Mammary epithelial cell (primary cell): ENCODE measurements at regions of chr12 and their contacts with region 1.

Region 1: GRCh38 chr12:132614861-132615578 is 3.6 kb upstream of the P2RX2 start:
- DNase-seq: peak; percentile 74
- H3K4me3 ChIP-seq: no peak overlapping the region
- H3K27ac ChIP-seq: no peak overlapping the region
- H3K4me1 ChIP-seq: peaks cover 7% of the 10 kb centered on the region
- H3K27me3 ChIP-seq: peaks cover 18% of the 10 kb centered on the region
- CTCF ChIP-seq: peak; percentile 73 to 87

Region 2: DNA sequence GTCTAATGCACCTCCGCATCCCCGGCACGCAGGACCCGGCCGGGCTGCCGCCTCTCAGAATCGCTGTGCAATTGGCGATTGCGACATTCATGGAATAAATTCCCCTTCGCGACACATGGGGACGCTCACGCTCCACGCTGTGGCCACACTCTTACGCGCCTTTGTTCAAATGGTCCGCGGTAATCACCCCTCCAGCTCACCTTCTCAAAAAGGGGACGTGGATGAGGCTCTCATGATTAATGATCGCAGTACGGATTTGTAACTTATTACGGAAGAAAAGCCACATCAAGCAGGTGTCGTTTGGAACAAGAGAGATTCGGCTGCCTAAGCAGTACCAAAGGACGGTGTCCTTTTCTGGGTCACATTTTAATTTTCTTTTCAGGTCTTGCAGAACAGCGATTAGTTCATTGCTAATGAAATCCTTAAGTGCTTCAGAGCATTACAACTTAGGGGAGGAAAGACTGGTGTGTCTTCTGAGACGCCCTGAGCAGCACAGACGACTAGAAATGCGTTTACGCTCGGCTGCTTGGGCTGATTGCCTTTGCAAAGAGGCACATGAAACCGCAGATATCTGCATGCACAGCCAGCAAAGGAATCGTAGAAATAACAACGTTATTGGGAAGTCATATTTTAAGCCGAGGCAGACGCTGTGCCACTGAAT is 1698.6 kb before region 1 on chr12:
- CTCF ChIA-PET with region 1: no interaction called
- dilution Hi-C with region 1: no loop called
- in situ Hi-C with region 1: no loop called
- intact Hi-C with region 1: loop called (anchors 10 kb)
- DNase-seq: peak; percentile 21
- H3K4me3 ChIP-seq: no peak overlapping the region
- H3K27ac ChIP-seq: no peak overlapping the region
- H3K4me1 ChIP-seq: no peaks in the 10 kb centered on the region
- H3K27me3 ChIP-seq: no peaks in the 10 kb centered on the region
- CTCF ChIP-seq: peak; percentile 59 to 87

Region 3: DNA sequence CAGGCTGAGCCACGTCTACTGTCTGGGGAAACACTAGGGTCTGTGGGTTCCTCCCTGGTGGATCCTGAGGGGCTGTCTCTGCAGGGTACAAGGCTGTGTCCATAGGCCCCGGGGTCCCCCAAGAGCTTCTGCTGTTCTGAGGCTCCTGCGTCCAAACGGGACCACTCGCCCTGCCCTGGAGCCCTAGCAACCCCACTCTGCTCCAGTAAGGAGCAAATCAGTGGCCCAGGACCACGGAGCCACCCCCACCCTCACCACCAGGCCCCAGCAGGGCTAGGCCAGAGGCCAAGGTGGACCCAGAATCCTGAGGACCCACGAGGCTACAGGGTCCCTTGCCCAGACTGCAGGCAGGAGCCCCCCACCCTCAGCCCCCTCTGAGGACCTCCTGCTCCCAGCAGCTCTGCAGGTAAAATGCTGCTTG is 210.6 kb before region 1 on chr12:
- CTCF ChIA-PET with region 1: no interaction called
- dilution Hi-C with region 1: no loop called
- in situ Hi-C with region 1: no loop called
- intact Hi-C with region 1: no loop called
- DNase-seq: no peak
- H3K4me3 ChIP-seq: no peak overlapping the region
- H3K27ac ChIP-seq: no peak overlapping the region
- H3K4me1 ChIP-seq: peaks cover 8% of the 10 kb centered on the region
- H3K27me3 ChIP-seq: peaks cover 18% of the 10 kb centered on the region
- CTCF ChIP-seq: no peak

Region 4: GRCh38 chr12:132414634-132415326 is 200.2 kb before region 1 on chr12:
- CTCF ChIA-PET with region 1: interaction called, 5 read pairs
- dilution Hi-C with region 1: no loop called
- in situ Hi-C with region 1: loop called in 1 of 2 experiments (anchors 10 kb)
- intact Hi-C with region 1: loop called (anchors 1 kb)
- DNase-seq: peak; percentile 57
- H3K4me3 ChIP-seq: no peak overlapping the region
- H3K27ac ChIP-seq: no peak overlapping the region
- H3K4me1 ChIP-seq: no peaks in the 10 kb centered on the region
- H3K27me3 ChIP-seq: peaks cover 3% of the 10 kb centered on the region
- CTCF ChIP-seq: peak; percentile 58 to 97

Region 5: DNA sequence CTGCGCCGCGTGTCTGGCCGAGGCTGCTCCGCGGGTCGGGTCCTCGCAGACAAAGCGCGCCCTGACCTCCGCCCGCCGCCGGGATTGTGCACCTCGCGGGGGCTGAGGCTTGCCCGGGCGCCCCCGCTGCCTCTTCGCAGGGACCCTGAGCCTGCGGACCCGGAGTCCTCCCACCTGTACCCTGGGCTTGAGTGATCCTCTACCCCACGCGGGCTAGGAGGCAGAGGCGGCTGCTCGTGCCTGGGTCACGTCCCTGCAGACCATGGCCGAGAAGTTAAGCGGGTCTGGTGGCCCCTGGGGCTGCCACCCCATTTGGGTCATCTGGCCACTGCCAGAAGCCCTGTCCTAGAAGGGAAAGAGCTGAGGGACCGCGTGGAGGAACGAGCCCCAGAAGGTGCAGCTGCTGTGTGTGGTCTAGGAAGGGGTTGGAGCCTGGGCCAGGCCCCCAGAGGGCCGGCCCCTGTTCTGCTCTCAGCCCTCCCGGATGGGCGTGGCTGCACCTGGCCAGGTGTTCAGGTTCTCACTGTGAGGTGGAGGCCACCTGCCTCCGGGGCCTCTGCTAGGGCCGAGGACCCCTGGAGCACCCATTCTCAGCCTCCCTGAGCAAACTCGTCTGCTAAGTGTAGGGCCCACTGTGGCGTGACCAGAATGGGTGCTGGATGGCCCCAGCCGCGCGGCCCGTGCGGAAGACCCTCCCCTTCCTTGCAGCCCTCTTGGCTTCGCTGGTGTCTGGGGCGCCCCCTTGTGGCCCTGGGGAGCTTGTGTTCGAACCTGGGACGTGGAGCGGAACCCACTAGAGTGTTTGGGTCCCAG is 54.2 kb before region 1 on chr12:
- CTCF ChIA-PET with region 1: no interaction called
- dilution Hi-C with region 1: no loop called
- in situ Hi-C with region 1: no loop called
- intact Hi-C with region 1: loop called (anchors 1 kb)
- DNase-seq: peak; percentile 52
- H3K4me3 ChIP-seq: peak overlapping the region; percentile 42 to 66 (median 63)
- H3K27ac ChIP-seq: no peak overlapping the region
- H3K4me1 ChIP-seq: peaks cover 12% of the 10 kb centered on the region
- H3K27me3 ChIP-seq: no peaks in the 10 kb centered on the region
- CTCF ChIP-seq: peak; percentile 44 to 75

Region 6: GRCh38 chr12:132657004-132657683 is 42.1 kb after region 1 on chr12:
- CTCF ChIA-PET with region 1: no interaction called
- dilution Hi-C with region 1: loop called (anchors 5 kb)
- in situ Hi-C with region 1: no loop called
- intact Hi-C with region 1: no loop called
- DNase-seq: no peak
- H3K4me3 ChIP-seq: no peak overlapping the region
- H3K27ac ChIP-seq: no peak overlapping the region
- H3K4me1 ChIP-seq: no peaks in the 10 kb centered on the region
- H3K27me3 ChIP-seq: no peaks in the 10 kb centered on the region
- CTCF ChIP-seq: no peak